ENCODE measurements at regions of chr12 and their contacts with region 1.

Region 1: DNA sequence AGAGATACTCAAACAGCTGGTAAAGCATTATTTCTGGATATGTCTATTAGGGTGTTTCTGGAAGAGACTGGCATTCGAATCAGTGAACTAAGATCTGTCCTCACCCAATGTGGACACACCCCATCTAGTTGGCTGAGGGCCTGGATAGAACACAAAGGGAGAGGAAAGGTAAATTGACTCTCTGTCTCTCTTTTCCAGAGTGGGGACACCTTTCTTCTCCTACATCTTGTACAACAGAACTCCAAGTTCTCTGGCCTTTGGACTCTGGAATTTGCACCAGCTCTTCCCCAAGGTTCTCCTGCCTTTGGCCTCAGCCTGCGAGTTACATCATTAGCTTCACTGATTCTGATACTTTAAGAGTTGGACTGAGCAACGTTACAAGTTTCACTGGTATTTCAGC is 1253.9 kb downstream of the SLC16A7 start:
- DNase-seq: no peak
- ATAC-seq: no peak
- H3K4me3 ChIP-seq: no peak overlapping the region
- H3K27ac ChIP-seq: no peak overlapping the region
- H3K4me1 ChIP-seq: no peaks in the 10 kb centered on the region
- H3K27me3 ChIP-seq: no peaks in the 10 kb centered on the region
- CTCF ChIP-seq: no peak

Region 2: DNA sequence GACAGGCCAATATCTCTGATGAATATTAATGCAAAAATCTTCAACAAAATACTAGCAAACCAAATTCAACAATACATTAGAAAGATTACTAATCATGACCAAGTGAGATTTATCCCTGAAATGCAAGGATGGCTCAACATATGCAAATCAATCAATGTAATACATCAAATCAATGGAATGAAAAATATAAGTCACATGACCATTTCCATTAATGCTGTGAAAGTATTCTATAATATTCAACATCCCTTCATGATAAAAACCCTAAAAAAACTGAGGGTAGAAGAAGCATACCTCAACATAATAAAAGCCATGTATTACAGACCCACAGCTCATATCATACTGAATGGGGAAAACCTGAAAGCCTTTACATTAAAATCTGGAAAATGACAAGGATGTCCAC is 30.2 kb after region 1 on chr12:
- intact Hi-C with region 1: loop called in 1 of 10 experiments (anchors 2 kb)
- DNase-seq: no peak
- ATAC-seq: no peak
- H3K4me3 ChIP-seq: no peak overlapping the region
- H3K27ac ChIP-seq: no peak overlapping the region
- H3K4me1 ChIP-seq: no peaks in the 10 kb centered on the region
- H3K27me3 ChIP-seq: no peaks in the 10 kb centered on the region
- CTCF ChIP-seq: no peak

Measured in heart right ventricle (tissue), 16 donors.